ENCODE measurements at regions of chr1 and their contacts with region 1.

Region 1: DNA sequence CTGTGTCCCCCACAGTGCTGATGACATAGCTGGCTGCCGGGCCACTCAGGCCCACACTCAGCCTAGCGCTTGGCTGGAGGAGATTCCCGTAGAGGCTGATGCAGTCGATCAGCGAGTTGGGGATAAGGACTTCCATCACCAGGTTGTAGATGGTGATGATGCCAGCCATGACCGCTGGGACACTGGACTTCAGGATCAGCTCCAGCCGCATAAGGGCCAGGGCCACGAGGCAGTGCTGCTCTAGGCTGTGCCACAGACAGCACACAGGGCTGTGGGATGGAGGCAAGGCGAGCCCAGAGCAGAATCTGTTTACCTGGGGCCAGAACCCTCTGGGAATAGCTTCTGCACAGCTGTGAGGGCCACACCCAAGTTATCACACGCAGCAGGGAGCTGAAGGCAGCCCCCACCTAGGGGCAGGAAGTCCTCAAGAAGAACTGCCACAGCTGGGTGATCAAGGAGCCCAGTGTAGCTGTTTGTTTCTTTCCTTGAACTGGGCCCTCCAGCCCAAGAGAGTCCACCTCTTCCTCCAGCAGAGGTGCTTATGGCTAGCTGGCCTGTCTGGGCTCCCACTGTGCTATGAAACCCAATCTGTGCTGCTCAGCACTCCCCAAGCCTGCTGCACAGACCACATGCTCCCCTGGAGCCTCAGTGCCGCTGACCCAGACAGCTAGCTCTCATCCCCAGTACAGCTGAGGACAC is 6.2 kb downstream of the SLC2A1 start:
- DNase-seq: peak; percentile 92
- H3K4me3 ChIP-seq: peak overlapping the region; percentile 64
- H3K27ac ChIP-seq: peak overlapping the region; percentile 93
- H3K4me1 ChIP-seq: peaks cover 88% of the 10 kb centered on the region
- CTCF ChIP-seq: no peak

Region 2: DNA sequence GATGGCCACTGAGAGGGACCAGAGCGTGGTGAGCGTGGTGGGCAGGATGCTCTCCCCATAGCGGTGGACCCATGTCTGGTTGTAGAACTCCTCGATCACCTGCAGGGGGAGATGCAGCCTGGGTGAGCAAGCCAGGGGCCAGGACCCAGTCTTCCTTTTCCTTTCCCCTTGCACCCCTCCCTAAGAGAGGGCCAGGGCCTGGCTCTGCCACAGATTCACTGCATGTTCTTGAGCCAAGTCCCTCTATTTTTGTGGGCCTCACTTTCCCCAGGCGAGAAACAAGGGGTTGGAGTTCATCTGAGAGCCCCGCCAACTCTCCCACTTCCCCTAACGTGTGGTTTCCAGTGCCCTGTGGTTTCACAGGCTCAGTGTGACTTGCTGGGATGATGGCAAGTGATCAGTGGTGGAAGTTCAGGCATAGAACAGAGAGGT is 21.3 kb before region 1 on chr1:
- CTCF ChIA-PET with region 1: interaction called, 3 read pairs
- POLR2A ChIA-PET with region 1: interaction called, 16 read pairs
- intact Hi-C with region 1: loop called (anchors 1 kb)
- DNase-seq: peak; percentile 64
- H3K4me3 ChIP-seq: peak overlapping the region; percentile 41
- H3K27ac ChIP-seq: peak overlapping the region; percentile 91
- H3K4me1 ChIP-seq: peaks cover 55% of the 10 kb centered on the region
- CTCF ChIP-seq: peak; percentile 77

Region 3: GRCh38 chr1:42936309-42937078 is 16.0 kb before region 1 on chr1:
- CTCF ChIA-PET with region 1: interaction called, 4 read pairs
- POLR2A ChIA-PET with region 1: interaction called, 24 read pairs
- intact Hi-C with region 1: loop called (anchors 1 kb)
- DNase-seq: peak; percentile 32
- H3K4me3 ChIP-seq: no peak overlapping the region
- H3K27ac ChIP-seq: peak overlapping the region; percentile 91
- H3K4me1 ChIP-seq: peaks cover 84% of the 10 kb centered on the region
- CTCF ChIP-seq: no peak

Region 4: GRCh38 chr1:42941640-42942330 is 10.7 kb before region 1 on chr1:
- CTCF ChIA-PET with region 1: interaction called, 7 read pairs
- POLR2A ChIA-PET with region 1: interaction called, 24 read pairs
- intact Hi-C with region 1: loop called (anchors 1 kb)
- DNase-seq: no peak
- H3K4me3 ChIP-seq: peak overlapping the region; percentile 15
- H3K27ac ChIP-seq: peak overlapping the region; percentile 93
- H3K4me1 ChIP-seq: peaks cover 84% of the 10 kb centered on the region
- CTCF ChIP-seq: no peak

Region 5: GRCh38 chr1:42971841-42972291 is 19.4 kb after region 1 on chr1:
- CTCF ChIA-PET with region 1: no interaction called
- POLR2A ChIA-PET with region 1: no interaction called
- intact Hi-C with region 1: no loop called
- DNase-seq: no peak
- H3K4me3 ChIP-seq: no peak overlapping the region
- H3K27ac ChIP-seq: no peak overlapping the region
- H3K4me1 ChIP-seq: no peaks in the 10 kb centered on the region
- CTCF ChIP-seq: no peak

Region 6: DNA sequence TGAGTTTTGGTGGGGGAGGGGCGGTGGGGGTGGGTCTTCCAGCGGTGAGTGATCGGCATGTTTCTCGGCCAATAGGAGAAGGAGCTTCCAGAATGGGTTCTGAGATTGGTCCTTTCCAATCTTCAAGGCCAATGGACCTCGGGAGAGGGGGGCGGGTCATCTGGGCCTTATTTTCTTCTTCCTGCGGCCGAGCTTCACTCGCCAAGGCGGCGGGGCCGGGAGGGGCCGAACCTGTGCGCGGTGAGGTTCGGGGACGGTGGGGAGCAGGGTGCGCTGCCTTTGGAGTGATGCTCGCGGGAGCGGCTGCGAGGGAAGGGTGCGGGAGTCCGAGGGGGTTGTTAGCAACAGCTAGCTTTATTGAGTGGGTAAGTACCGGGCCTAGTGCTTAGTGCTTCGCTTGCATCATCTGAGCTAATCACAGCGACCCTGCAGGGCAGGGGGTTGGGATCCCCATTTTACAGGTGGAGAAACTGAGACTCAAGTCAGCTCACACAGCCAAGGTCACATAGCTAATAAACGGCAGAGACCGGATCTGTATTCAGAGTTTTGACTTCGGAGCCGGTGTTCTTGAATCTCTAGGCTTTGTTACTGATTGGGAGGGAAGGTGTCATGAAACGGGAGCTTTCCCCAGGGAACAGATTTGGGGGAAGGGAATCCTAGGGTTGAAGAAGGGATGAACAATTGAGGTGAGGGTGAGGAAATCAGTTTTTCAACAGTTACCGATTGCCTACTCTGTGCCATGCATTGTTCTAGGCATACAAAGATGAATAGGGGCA is 698.0 kb after region 1 on chr1:
- CTCF ChIA-PET with region 1: no interaction called
- POLR2A ChIA-PET with region 1: no interaction called
- intact Hi-C with region 1: loop called (anchors 5 kb)
- DNase-seq: peak; percentile 99
- H3K4me3 ChIP-seq: peak overlapping the region; percentile 98
- H3K27ac ChIP-seq: peak overlapping the region; percentile 61
- H3K4me1 ChIP-seq: peaks cover 27% of the 10 kb centered on the region
- CTCF ChIP-seq: no peak